ENCODE measurements at regions of chr17 and their contacts with region 1.

Region 1: DNA sequence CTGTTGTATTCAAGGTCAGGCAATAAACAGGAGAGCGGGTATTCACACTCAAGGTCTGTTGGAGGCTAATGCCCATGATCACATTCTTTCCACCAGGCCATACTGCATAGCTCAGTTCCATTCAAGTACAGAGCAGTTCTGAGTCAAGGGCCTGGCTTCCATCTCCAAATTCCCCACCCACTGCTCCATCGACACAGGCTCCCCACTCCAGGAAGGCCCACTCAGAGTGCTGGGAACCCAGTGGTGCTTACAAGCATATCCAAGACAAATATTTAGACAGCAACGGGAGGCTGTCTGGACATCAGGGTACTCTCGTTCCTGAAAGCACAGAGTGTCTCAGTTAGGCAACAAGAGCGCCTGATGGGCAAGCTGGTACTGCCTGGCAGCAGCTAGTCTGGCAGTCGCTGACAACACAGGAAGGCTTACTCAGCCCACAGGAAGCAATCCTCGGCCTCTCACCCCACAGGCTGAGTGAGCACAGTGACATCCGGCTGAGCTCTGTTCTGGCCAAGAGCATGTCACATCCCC is 40.9 kb downstream of the RFFL start:
- DNase-seq: peak; percentile 93
- H3K4me3 ChIP-seq: no peak overlapping the region
- H3K27ac ChIP-seq: peak overlapping the region; percentile 65 to 79 (median 74)
- H3K4me1 ChIP-seq: peaks cover 0 to 48% (median 42%) of the 10 kb centered on the region in 4 donors
- H3K27me3 ChIP-seq: no peaks in the 10 kb centered on the region
- CTCF ChIP-seq: peak; percentile 30 to 59 (median 42)
- EP300 ChIP-seq: peak; percentile 3 to 93 (median 56)
- POLR2A ChIP-seq: no peak

Region 2: DNA sequence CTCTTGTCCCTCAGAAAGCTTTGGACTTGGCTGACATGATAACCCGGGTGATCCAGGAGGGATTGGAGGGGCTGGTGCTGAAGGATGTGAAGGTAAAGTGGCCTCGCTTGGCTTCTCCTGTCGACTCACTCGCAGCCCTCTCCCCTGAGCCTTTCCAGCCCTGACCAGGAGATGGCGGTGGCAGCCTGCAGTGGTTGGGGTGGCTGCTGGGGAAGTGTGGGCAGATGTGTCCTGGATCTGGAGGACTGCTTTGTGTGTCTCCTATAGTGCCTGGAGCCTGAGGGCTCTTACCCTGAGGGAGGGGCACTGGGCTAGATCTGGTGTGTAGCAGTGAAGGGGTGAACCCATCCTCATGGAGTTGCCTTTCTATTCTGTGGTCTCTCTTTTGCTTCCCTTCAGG is 24.4 kb before region 1 on chr17:
- intact Hi-C with region 1: loop called (anchors 1 kb)
- DNase-seq: peak; percentile 89
- H3K4me3 ChIP-seq: peak overlapping the region in 2 of 4 donors; percentile 4 to 13
- H3K27ac ChIP-seq: peak overlapping the region; percentile 86 to 92 (median 89)
- H3K4me1 ChIP-seq: peaks cover 0 to 69% (median 57%) of the 10 kb centered on the region in 4 donors
- H3K27me3 ChIP-seq: no peaks in the 10 kb centered on the region
- CTCF ChIP-seq: peak; percentile 74 to 87 (median 79)
- EP300 ChIP-seq: no peak
- POLR2A ChIP-seq: no peak

Region 3: DNA sequence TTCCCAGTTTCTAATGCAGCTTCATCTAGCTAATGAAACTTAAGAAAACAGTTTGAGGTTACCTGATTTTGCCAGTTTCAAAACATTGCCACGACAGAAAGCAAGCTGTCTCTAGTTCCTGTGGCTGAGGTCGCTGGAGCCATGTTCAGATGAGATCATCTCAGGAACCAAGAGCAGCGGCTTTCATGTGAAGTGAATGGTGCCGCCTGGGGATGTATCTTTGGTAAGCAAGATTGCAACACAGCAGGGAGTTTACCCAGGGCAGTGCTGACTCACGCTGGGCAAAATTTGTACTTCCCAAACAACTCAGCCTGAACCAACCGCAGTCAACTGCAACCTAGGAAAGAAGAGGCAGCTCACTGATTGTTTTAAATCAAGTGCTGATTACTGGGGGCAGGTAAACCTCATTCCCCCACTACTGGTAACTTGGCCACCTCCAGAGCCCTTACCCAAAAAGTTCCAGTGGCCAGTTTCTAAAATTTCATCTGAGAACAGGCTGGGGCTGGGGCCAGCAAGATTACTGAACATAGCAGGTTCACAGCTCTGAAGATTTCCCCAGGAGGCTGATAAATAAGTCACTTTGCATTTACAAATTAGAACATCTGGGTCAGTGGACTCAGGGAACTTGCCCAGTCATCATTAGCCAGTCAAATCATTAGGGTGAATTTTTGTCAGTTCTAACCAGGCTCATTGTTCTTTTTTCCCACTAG is 41.1 kb after region 1 on chr17 and contains the start of gene RFFL:
- intact Hi-C with region 1: loop called (anchors 2 kb)
- DNase-seq: peak; percentile 95
- H3K4me3 ChIP-seq: peak within 1 kb of the TSS in 3 of 4 donors; percentile 16 to 29 (median 26)
- H3K27ac ChIP-seq: peak within 1 kb of the TSS; percentile 79 to 88 (median 84)
- H3K4me1 ChIP-seq: peaks cover 0 to 20% (median 17%) of the 10 kb centered on the region in 4 donors
- H3K27me3 ChIP-seq: no peaks in the 10 kb centered on the region
- CTCF ChIP-seq: peak in 2 of 4 experiments; percentile 11 to 19
- EP300 ChIP-seq: no peak
- POLR2A ChIP-seq: peak in 1 of 2 donors; percentile 22
- total RNA-seq, gene RFFL: 16.5 to 25.2 (median 21.8) TPM